ENCODE measurements at regions of chr4 and their contacts with region 1.

Region 1: DNA sequence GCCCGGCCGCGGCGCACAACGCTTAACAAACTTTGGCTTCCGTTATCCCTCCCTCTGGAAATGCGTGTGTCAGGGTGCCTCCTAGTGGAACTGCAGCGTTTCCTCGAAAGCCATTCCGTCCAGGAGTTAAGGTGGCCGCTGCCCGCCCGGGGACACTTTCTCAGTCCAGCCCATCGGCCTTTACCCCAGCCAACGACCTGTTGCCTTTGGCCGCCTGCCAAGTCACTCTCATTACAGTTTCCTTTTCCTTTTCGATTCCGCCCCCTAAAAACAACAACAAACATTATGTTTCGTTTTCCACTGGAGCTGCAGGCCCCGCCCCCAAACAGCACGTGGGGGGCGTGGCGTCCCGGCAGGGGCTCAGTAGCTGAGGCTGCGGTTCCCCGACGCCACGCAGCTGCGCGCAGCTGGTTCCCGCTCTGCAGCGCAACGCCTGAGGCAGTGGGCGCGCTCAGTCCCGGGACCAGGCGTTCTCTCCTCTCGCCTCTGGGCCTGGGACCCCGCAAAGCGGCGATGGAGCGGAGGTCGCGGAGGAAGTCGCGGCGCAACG is at the start of gene HERC5:
- DNase-seq: peak; percentile 85
- ATAC-seq: peak; percentile 91
- H3K4me3 ChIP-seq: peak within 1 kb of the TSS; percentile 50 to 64
- H3K27ac ChIP-seq: peak within 1 kb of the TSS; percentile 40; the same call in 1 of the 2 replicates
- H3K4me1 ChIP-seq: peaks cover 3 to 21% of the 10 kb centered on the region in 2 experiments; a peak in 2 of 4 replicates
- H3K27me3 ChIP-seq: no peaks in the 10 kb centered on the region
- CTCF ChIP-seq: peak; percentile 60 to 73 (median 65)
- POLR2A ChIP-seq: no peak
- RAD21 ChIP-seq: peak; percentile 82
- total RNA-seq, gene HERC5: 7.2 TPM

Region 2: DNA sequence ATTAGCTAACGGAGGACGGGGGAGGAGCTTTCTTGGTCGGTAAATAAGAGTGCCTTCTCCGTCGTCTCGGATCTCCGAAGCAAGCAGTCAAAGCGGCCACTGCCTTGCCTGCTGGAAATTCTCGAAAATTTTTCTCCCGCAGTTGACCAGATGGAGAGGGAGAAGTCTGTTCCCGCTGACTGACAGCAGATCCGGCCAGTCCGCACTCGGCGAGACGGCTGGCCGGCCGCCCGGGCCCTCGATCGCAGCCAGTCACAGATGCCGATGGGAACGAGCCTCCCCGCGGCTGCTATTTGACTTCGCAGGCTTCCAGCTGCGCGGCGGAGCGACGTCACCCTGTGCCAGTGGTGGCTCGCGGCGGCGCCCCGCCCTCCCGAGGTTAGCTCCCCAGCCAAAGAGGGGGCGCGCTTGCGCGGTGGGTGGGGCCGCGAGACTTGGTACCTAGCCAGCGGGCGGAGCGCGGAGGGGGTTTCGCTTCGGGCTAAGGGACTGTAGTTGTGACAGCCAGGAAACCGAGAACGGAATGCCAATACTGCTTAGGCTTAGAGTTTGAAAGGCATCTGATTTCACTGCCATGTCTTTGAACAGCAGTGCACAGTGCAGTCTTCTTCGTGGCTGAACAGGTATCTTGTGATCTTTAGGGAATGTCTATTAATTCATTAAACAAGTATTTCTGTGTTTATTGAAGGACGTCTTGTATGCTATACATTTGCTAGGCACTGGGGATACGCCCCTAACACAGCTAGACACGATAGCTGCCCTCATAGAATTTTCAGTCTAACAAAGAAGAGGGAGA is 172.2 kb before region 1 on chr4 and contains the start of gene PPM1K:
- CTCF ChIA-PET with region 1: interaction called, 5 read pairs
- POLR2A ChIA-PET with region 1: no interaction called
- RAD21 ChIA-PET with region 1: no interaction called
- intact Hi-C with region 1: loop called (anchors 5 kb)
- DNase-seq: peak; percentile 94
- ATAC-seq: peak; percentile 91
- H3K4me3 ChIP-seq: peak within 1 kb of the TSS; percentile 49 to 75
- H3K27ac ChIP-seq: peak within 1 kb of the TSS; percentile 48
- H3K4me1 ChIP-seq: peaks cover 17 to 21% of the 10 kb centered on the region in 2 experiments
- H3K27me3 ChIP-seq: no peaks in the 10 kb centered on the region
- CTCF ChIP-seq: no peak
- POLR2A ChIP-seq: no peak
- RAD21 ChIP-seq: no peak
- total RNA-seq, gene PPM1K: 4.2 TPM

Region 3: DNA sequence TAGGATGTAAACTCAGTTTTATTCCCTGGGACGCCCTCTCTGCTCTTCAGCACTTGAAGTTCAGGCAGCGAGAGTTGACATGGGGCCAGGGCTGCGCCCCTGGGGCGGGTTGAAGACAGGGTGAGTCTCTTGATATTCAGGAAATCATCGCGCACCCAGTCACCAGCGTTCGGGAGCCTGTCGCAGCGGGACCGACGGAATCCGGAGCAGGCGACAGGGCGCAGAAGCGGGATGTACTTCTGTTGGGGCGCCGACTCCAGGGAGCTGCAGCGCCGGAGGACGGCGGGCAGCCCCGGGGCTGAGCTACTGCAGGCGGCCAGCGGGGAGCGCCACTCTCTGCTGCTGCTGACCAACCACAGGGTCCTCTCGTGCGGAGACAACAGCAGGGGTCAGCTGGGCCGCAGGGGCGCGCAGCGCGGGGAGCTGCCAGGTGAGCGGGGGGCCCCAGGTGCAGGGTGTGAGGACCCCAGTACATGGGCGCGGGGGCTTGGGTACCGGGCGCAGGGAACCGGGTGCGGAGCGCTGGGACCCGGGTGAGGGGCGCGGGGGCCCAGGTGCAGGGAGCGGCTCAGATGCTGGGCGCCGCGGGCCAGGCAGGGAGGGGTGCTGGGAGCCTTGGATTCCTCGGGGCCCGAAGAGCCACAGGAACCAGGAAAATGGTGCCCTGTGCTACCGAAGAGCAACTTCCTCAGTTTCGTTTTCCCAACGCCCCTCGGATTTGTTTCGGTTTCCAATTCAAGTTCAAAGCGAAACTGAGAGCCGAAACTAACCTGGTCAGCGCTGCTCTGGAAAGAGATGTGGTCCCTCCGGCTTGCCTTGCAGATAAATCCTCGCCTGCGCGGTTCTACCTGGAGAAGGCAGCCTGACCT is 77.9 kb before region 1 on chr4 and contains the start of gene HERC6:
- CTCF ChIA-PET with region 1: interaction called, 5 read pairs
- POLR2A ChIA-PET with region 1: no interaction called
- RAD21 ChIA-PET with region 1: interaction called in 1 of 2 experiments, 3 read pairs
- intact Hi-C with region 1: loop called (anchors 2 kb)
- DNase-seq: peak; percentile 70
- ATAC-seq: peak; percentile 97
- H3K4me3 ChIP-seq: peak within 1 kb of the TSS; percentile 79 to 94
- H3K27ac ChIP-seq: peak within 1 kb of the TSS; percentile 70
- H3K4me1 ChIP-seq: peaks cover 0 to 5% of the 10 kb centered on the region in 2 experiments; a peak in 1 of 4 replicates
- H3K27me3 ChIP-seq: no peaks in the 10 kb centered on the region
- CTCF ChIP-seq: peak; percentile 51 to 68 (median 65); a peak in 5 of 6 replicates
- POLR2A ChIP-seq: no peak
- RAD21 ChIP-seq: peak; percentile 50
- total RNA-seq, gene HERC6: 4.9 TPM

Region 4: DNA sequence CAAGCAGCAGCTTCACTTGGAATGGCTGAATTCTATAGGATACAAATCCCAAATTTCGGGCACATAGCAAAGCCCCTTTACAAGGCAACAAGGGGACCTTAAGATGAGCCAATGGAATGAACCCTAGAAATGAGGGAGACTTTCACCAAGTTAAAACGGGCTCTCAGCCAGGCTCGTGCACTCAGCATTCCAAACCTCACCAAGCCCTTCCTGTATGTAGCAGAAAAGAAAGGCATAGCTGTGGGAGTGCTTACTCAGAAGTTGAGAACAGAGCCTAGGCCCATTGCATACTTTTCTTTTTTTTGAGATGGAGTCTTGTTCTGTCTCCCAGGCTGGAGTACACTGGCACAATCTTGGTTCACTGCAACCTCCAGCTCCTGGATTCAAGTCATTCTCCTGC is 10.7 kb before region 1 on chr4:
- CTCF ChIA-PET with region 1: interaction called, 12 read pairs
- POLR2A ChIA-PET with region 1: interaction called, 3 read pairs
- RAD21 ChIA-PET with region 1: no interaction called
- intact Hi-C with region 1: no loop called
- DNase-seq: no peak
- ATAC-seq: no peak
- H3K4me3 ChIP-seq: no peak overlapping the region
- H3K27ac ChIP-seq: no peak overlapping the region
- H3K4me1 ChIP-seq: no peaks in the 10 kb centered on the region
- H3K27me3 ChIP-seq: no peaks in the 10 kb centered on the region
- CTCF ChIP-seq: no peak
- POLR2A ChIP-seq: no peak
- RAD21 ChIP-seq: no peak

Region 5: GRCh38 chr4:88514557-88515511 is 58.0 kb after region 1 on chr4:
- CTCF ChIA-PET with region 1: interaction called, 7 read pairs
- POLR2A ChIA-PET with region 1: no interaction called
- RAD21 ChIA-PET with region 1: no interaction called
- intact Hi-C with region 1: loop called (anchors 2 kb)
- DNase-seq: no peak
- ATAC-seq: no peak
- H3K4me3 ChIP-seq: no peak overlapping the region
- H3K27ac ChIP-seq: no peak overlapping the region
- H3K4me1 ChIP-seq: no peaks in the 10 kb centered on the region
- H3K27me3 ChIP-seq: no peaks in the 10 kb centered on the region
- CTCF ChIP-seq: no peak
- POLR2A ChIP-seq: no peak
- RAD21 ChIP-seq: no peak

Region 6: DNA sequence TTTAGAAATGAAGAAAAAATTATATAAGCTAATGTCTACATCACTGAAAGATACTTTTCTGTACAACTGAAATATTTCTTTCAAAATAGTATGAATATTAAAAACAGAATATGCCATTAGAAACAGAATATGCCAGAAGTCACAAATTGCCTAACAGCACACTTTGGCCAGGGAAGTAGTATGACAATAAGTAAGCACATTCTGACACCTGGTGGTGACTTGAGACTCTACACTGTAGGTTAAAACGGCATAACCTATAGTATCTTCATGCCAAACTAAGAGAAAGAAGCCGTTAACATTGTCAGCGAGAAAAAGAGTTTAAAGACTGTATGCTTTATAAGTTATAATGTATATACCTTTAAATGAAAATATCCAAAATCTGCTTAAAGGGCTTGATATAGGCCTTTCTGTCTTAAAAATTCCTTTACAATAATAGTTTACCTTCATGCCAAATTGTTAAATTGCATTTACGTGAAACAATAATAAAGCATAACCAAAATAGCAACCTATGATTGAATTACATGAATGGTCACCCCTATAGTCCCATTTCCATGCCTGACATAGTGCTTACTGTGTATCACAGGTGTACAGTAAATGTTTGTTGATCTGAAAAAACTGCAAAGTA is 567.3 kb after region 1 on chr4:
- CTCF ChIA-PET with region 1: no interaction called
- POLR2A ChIA-PET with region 1: no interaction called
- RAD21 ChIA-PET with region 1: no interaction called
- intact Hi-C with region 1: no loop called
- DNase-seq: peak; percentile 65
- ATAC-seq: peak; percentile 93
- H3K4me3 ChIP-seq: no peak overlapping the region
- H3K27ac ChIP-seq: no peak overlapping the region
- H3K4me1 ChIP-seq: no peaks in the 10 kb centered on the region
- H3K27me3 ChIP-seq: no peaks in the 10 kb centered on the region
- CTCF ChIP-seq: peak; percentile 70 to 76 (median 75)
- POLR2A ChIP-seq: no peak
- RAD21 ChIP-seq: peak; percentile 91

Measured in HCT116 (cell line).